ENCODE measurements at regions of chr3 and their contacts with region 1.

Region 1: DNA sequence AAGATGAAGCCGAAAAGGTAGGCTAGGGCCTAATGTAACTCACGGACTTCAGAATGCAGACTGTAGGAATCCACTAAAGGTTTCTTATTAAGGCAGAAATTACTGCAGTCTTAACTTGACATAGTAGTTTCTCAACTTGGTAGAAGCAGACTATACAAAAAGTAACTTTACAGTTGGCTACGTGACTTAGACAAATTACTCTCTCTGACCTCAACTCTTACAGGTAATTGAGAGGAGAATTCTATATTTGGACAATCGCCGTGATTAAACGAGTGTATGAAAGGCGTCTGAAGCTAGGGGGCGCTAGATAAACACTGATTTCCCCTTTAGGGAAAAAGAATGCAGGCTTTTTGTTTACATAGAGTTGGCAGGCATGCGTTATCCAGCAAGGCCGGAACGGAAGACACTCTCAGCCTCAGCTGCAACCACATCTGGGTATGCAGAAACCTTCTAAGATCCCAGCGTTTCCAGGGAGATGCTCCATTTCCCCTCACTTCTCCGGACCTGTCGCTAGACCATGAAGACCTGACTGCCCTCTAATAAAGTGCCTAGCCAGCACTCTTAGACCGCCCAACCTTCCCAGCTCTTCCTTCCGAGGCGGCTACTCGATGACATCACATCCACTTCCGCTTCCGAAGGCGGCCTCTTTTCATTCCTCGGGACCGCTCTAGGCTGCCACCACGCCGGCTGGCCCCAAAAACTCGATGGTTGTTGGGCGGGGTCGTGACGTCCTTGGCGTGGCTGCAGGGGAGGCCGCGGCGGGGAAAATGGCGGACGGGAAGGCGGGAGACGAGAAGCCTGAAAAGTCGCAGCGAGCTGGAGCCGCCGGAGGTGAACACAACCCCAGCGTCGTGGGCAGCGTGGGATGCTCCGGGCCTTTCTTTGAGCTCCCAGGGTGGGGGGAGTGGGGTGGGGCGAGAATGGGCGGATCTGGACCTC is at the start of gene PCNP:
- DNase-seq: peak; percentile 100
- ATAC-seq: peak; percentile 78
- H3K4me3 ChIP-seq: peak within 1 kb of the TSS; percentile 88 to 97 (median 91)
- H3K4me3 Mint-ChIP-seq: peak within 1 kb of the TSS; percentile 99
- H3K27ac ChIP-seq: peak within 1 kb of the TSS; percentile 98 to 99
- H3K27ac Mint-ChIP-seq: peak within 1 kb of the TSS; percentile 98
- H3K4me1 ChIP-seq: peaks cover 32 to 39% of the 10 kb centered on the region in 2 donors
- H3K4me1 Mint-ChIP-seq: peaks cover 46% of the 10 kb centered on the region
- H3K27me3 ChIP-seq: no peaks in the 10 kb centered on the region
- H3K27me3 Mint-ChIP-seq: no peaks in the 10 kb centered on the region
- CTCF ChIP-seq: peak; percentile 88
- total RNA-seq, gene PCNP: 156 and 157 TPM in 2 replicates

Region 2: GRCh38 chr3:101229681-101230080 is 344.0 kb before region 1 on chr3:
- CTCF ChIA-PET with region 1: no interaction called
- POLR2A ChIA-PET with region 1: no interaction called
- intact Hi-C with region 1: no loop called
- DNase-seq: no peak
- ATAC-seq: no peak
- H3K4me3 ChIP-seq: no peak overlapping the region
- H3K4me3 Mint-ChIP-seq: no peak overlapping the region
- H3K27ac ChIP-seq: no peak overlapping the region
- H3K27ac Mint-ChIP-seq: no peak overlapping the region
- H3K4me1 ChIP-seq: no peaks in the 10 kb centered on the region
- H3K4me1 Mint-ChIP-seq: peaks cover 7% of the 10 kb centered on the region
- H3K27me3 ChIP-seq: no peaks in the 10 kb centered on the region
- H3K27me3 Mint-ChIP-seq: no peaks in the 10 kb centered on the region
- CTCF ChIP-seq: no peak

Region 3: GRCh38 chr3:101381809-101382208 is 191.9 kb before region 1 on chr3:
- CTCF ChIA-PET with region 1: no interaction called
- POLR2A ChIA-PET with region 1: no interaction called
- intact Hi-C with region 1: loop called (anchors 5 kb)
- DNase-seq: peak; percentile 36
- ATAC-seq: peak; percentile 34
- H3K4me3 ChIP-seq: no peak overlapping the region
- H3K4me3 Mint-ChIP-seq: no peak overlapping the region
- H3K27ac ChIP-seq: no peak overlapping the region
- H3K27ac Mint-ChIP-seq: no peak overlapping the region
- H3K4me1 ChIP-seq: peaks cover 4 to 13% of the 10 kb centered on the region in 2 donors
- H3K4me1 Mint-ChIP-seq: peaks cover 45% of the 10 kb centered on the region
- H3K27me3 ChIP-seq: no peaks in the 10 kb centered on the region
- H3K27me3 Mint-ChIP-seq: no peaks in the 10 kb centered on the region
- CTCF ChIP-seq: peak; percentile 54

Region 4: DNA sequence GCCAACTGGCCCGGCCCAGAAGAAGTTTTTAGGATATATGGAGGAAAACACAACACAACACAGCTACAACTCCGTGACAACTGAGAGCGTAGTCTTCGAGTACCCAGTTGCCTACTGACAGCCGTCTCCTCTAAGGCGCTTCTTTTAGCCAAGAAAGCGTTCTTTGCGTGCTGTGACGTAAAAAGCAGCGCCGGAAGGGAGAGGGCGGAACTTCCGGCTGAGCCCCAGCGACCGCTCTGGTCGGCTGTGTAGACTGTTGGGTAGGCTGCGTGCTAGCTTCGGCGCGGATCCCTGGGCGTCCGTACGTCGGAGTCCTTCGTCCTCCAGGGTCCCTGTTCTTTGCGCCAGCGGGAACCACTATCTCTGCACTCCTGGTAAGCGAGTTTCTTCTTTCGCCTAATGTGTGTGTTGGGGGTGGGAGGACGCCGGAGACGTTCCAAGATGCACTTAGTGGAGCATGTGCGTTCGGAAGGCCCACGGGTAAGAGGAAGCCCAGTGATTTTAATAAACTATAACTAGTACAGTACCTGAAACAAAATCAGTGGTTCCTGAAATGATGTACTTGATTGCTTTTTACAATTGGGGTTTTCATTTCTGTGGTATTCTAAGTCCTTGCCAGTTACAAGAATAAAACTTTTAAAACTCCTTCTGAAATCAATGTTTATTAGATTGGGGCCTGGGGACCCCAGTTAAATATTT is 11.9 kb before region 1 on chr3 and contains the start of gene TRMT10C:
- CTCF ChIA-PET with region 1: interaction called, 33 read pairs
- POLR2A ChIA-PET with region 1: interaction called, 7 read pairs
- intact Hi-C with region 1: loop called (anchors 1 kb)
- DNase-seq: peak; percentile 96
- ATAC-seq: peak; percentile 94
- H3K4me3 ChIP-seq: peak within 1 kb of the TSS; percentile 86 to 96 (median 92)
- H3K4me3 Mint-ChIP-seq: peak within 1 kb of the TSS; percentile 98
- H3K27ac ChIP-seq: peak within 1 kb of the TSS; percentile 83 to 84
- H3K27ac Mint-ChIP-seq: peak within 1 kb of the TSS; percentile 94
- H3K4me1 ChIP-seq: peaks cover 23% of the 10 kb centered on the region in 2 donors
- H3K4me1 Mint-ChIP-seq: peaks cover 36% of the 10 kb centered on the region
- H3K27me3 ChIP-seq: peaks cover 0 to 25% (median 4%) of the 10 kb centered on the region in 4 experiments
- H3K27me3 Mint-ChIP-seq: peaks cover 7% of the 10 kb centered on the region
- CTCF ChIP-seq: no peak
- total RNA-seq, gene TRMT10C: 25.2 and 25.3 TPM in 2 replicates

Region 5: GRCh38 chr3:101588616-101589015 is 14.9 kb after region 1 on chr3:
- CTCF ChIA-PET with region 1: no interaction called
- POLR2A ChIA-PET with region 1: no interaction called
- intact Hi-C with region 1: no loop called
- DNase-seq: no peak
- ATAC-seq: no peak
- H3K4me3 ChIP-seq: no peak overlapping the region
- H3K4me3 Mint-ChIP-seq: no peak overlapping the region
- H3K27ac ChIP-seq: no peak overlapping the region
- H3K27ac Mint-ChIP-seq: no peak overlapping the region
- H3K4me1 ChIP-seq: no peaks in the 10 kb centered on the region
- H3K4me1 Mint-ChIP-seq: peaks cover 7% of the 10 kb centered on the region
- H3K27me3 ChIP-seq: no peaks in the 10 kb centered on the region
- H3K27me3 Mint-ChIP-seq: no peaks in the 10 kb centered on the region
- CTCF ChIP-seq: no peak

Region 6: GRCh38 chr3:101676765-101677435 is 103.2 kb after region 1 on chr3 and contains the start of gene ZBTB11:
- CTCF ChIA-PET with region 1: interaction called, 20 read pairs
- POLR2A ChIA-PET with region 1: interaction called, 12 read pairs
- intact Hi-C with region 1: loop called (anchors 1 kb)
- DNase-seq: peak; percentile 99
- ATAC-seq: peak; percentile 65
- H3K4me3 ChIP-seq: peak within 1 kb of the TSS; percentile 73 to 99 (median 94)
- H3K4me3 Mint-ChIP-seq: peak within 1 kb of the TSS; percentile 94
- H3K27ac ChIP-seq: peak within 1 kb of the TSS; percentile 96 to 98
- H3K27ac Mint-ChIP-seq: peak within 1 kb of the TSS; percentile 97
- H3K4me1 ChIP-seq: peaks cover 17 to 21% of the 10 kb centered on the region in 2 donors
- H3K4me1 Mint-ChIP-seq: peaks cover 40% of the 10 kb centered on the region
- H3K27me3 ChIP-seq: no peaks in the 10 kb centered on the region
- H3K27me3 Mint-ChIP-seq: no peaks in the 10 kb centered on the region
- CTCF ChIP-seq: no peak
- total RNA-seq, gene ZBTB11: 40.7 and 42.6 TPM in 2 replicates

Region 7: GRCh38 chr3:101779047-101779821 is 205.5 kb after region 1 on chr3 and contains the start of gene NXPE3:
- CTCF ChIA-PET with region 1: no interaction called
- POLR2A ChIA-PET with region 1: interaction called, 3 read pairs
- intact Hi-C with region 1: loop called (anchors 2 kb)
- DNase-seq: peak; percentile 93
- ATAC-seq: peak; percentile 92
- H3K4me3 ChIP-seq: peak within 1 kb of the TSS; percentile 65 to 89 (median 88)
- H3K4me3 Mint-ChIP-seq: peak within 1 kb of the TSS; percentile 94
- H3K27ac ChIP-seq: peak within 1 kb of the TSS; percentile 79 to 86
- H3K27ac Mint-ChIP-seq: peak within 1 kb of the TSS; percentile 98
- H3K4me1 ChIP-seq: peaks cover 21 to 29% of the 10 kb centered on the region in 2 donors
- H3K4me1 Mint-ChIP-seq: peaks cover 37% of the 10 kb centered on the region
- H3K27me3 ChIP-seq: no peaks in the 10 kb centered on the region
- H3K27me3 Mint-ChIP-seq: no peaks in the 10 kb centered on the region
- CTCF ChIP-seq: no peak
- total RNA-seq, gene NXPE3: 18.9 and 19.7 TPM in 2 replicates

Measured in B cell (primary cell).